ENCODE measurements at regions of chr1 and their contacts with region 1.

Region 1: DNA sequence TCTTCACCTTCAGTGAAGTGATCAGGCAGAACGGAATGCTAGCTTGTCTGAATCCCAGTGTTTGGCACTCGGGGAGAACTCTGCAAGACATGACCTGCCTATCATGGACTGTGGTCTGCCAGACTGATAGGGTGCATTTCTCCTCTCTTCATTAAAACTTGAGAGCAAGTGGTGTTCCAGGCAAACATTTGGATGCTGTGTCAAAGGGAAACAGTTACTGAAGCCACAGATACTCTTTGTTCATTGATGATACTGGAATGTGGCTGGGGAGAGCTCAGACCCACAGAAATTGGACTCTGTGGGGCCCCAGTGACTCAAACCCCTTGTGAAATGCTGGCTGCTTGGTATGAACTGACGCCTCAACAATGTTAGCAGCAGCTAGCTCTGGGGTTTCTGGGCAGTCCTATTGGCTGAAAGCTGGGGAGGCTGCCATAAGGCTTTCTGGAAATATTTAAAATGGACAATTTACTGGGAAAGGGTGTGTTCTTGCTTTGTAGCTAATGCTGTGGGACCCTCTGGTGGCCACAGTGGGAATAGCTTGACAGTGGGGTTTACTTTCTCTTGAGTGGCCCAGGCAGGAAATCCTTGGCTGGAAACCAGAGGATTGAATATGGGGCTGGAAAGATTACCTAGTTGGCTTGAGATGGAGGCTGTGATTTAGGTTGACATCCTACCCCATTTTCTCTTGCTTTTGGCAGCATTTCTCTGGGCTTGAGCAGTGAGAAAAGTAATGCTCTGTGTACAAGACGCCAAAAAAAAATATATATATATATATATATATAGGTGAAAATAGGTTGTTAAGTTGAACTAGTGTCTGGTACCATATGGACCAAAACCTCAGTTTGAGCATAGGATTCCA is 8.0 kb upstream of the S100A10 start:
- DNase-seq: peak; percentile 94
- ATAC-seq: peak; percentile 83

Region 2: DNA sequence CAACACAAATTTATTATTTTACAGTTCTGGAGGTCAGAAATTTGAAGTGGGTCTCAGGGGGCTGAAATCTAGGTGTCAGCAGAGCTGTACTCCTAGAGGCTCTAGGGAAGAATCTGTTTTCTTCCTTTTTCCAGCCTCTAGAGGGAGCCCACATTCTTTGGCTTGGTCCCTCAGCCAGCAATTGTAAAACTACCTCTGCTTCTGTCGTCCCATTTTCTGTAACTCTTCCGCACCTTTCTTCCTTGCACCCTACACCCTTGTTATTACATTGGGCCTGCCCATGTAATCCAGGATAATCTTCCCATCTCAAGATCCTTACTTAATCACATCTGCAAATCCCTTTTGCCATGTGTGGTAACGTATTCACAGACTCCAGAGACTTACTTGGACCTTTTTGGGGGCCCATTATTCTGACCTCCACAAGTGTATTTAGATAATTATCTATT is 67.5 kb before region 1 on chr1:
- intact Hi-C with region 1: loop called (anchors 5 kb)
- DNase-seq: no peak
- ATAC-seq: peak; percentile 86

Measured in sciatic nerve (tissue), 2 donors.